ENCODE measurements at regions of chr2 and their contacts with region 1.

Region 1: DNA sequence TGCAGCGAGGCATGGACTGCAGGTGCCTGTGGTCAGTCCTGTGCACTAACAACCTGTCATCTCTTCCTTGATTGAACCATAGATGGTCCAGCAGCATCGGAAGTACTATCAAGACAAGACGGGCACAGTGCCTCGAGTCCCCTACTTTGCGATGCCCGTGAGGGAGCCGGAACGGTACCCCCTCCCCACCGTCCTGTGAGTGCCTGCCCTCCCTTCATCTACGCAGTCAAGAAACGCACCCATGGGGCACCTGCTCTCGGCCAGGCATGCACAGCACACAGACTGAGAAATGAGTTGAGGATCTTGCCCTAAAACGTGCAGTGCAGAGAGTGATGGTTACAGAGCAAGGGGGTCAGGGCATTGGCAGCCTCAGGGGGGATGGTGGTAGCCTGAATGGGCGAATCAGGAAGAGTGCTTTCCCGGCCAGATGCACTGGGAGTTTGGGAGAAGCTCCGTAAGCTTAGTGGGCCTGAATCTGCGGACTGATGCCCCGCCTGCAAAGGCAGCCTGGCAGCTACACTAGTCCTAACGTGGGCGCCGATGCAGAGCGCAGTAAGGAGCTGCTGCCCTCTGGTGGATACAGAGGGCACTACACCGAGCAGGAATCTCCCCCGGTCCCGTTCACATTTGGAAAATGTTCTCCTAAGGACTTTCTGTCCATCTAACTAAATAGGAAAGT is 63.6 kb downstream of the CIB4 start:
- H3K4me3 ChIP-seq: no peak overlapping the region
- H3K27ac ChIP-seq: no peak overlapping the region
- H3K4me1 ChIP-seq: no peaks in the 10 kb centered on the region
- CTCF ChIP-seq: peak; percentile 86

Region 2: GRCh38 chr2:26164231-26164630 is 413.3 kb before region 1 on chr2:
- CTCF ChIA-PET with region 1: no interaction called
- POLR2A ChIA-PET with region 1: no interaction called
- H3K4me3 ChIP-seq: no peak overlapping the region
- H3K27ac ChIP-seq: no peak overlapping the region
- H3K4me1 ChIP-seq: no peaks in the 10 kb centered on the region
- CTCF ChIP-seq: no peak

Region 3: GRCh38 chr2:26503231-26503880 is 74.2 kb before region 1 on chr2:
- CTCF ChIA-PET with region 1: interaction called, 42 read pairs
- POLR2A ChIA-PET with region 1: no interaction called
- H3K4me3 ChIP-seq: peak overlapping the region; percentile 36
- H3K27ac ChIP-seq: no peak overlapping the region; the same call in 1 of the 2 replicates
- H3K4me1 ChIP-seq: no peaks in the 10 kb centered on the region; the same call in 1 of the 2 replicates
- CTCF ChIP-seq: peak; percentile 99

Region 4: GRCh38 chr2:26542194-26542455 is 35.4 kb before region 1 on chr2:
- CTCF ChIA-PET with region 1: interaction called, 14 read pairs
- POLR2A ChIA-PET with region 1: no interaction called
- H3K4me3 ChIP-seq: no peak overlapping the region
- H3K27ac ChIP-seq: no peak overlapping the region
- H3K4me1 ChIP-seq: no peaks in the 10 kb centered on the region
- CTCF ChIP-seq: no peak

Region 5: DNA sequence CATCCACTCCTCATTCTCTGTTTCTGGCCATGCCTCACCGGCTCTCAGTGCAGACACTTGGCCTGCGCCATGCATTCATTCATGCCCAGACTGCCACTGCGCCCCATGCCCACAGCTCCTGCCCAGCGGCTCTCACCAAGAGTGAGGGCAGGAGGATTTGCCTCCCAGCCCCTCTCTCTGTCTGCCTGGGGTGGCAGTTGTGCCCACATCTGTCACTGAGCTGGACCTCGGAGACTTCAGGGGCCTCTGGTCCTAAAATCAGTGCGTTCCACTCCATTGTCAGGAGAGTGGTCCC is 11.5 kb before region 1 on chr2:
- CTCF ChIA-PET with region 1: interaction called, 14 read pairs
- POLR2A ChIA-PET with region 1: no interaction called
- H3K4me3 ChIP-seq: no peak overlapping the region
- H3K27ac ChIP-seq: no peak overlapping the region
- H3K4me1 ChIP-seq: no peaks in the 10 kb centered on the region
- CTCF ChIP-seq: no peak

Region 6: GRCh38 chr2:26598336-26598995 is 20.9 kb after region 1 on chr2:
- CTCF ChIA-PET with region 1: interaction called, 13 read pairs
- POLR2A ChIA-PET with region 1: no interaction called
- H3K4me3 ChIP-seq: no peak overlapping the region
- H3K27ac ChIP-seq: no peak overlapping the region
- H3K4me1 ChIP-seq: no peaks in the 10 kb centered on the region
- CTCF ChIP-seq: no peak

Measured in HEK293 (cell line).